ENCODE measurements at regions of chr11 and their contacts with region 1.

Region 1: DNA sequence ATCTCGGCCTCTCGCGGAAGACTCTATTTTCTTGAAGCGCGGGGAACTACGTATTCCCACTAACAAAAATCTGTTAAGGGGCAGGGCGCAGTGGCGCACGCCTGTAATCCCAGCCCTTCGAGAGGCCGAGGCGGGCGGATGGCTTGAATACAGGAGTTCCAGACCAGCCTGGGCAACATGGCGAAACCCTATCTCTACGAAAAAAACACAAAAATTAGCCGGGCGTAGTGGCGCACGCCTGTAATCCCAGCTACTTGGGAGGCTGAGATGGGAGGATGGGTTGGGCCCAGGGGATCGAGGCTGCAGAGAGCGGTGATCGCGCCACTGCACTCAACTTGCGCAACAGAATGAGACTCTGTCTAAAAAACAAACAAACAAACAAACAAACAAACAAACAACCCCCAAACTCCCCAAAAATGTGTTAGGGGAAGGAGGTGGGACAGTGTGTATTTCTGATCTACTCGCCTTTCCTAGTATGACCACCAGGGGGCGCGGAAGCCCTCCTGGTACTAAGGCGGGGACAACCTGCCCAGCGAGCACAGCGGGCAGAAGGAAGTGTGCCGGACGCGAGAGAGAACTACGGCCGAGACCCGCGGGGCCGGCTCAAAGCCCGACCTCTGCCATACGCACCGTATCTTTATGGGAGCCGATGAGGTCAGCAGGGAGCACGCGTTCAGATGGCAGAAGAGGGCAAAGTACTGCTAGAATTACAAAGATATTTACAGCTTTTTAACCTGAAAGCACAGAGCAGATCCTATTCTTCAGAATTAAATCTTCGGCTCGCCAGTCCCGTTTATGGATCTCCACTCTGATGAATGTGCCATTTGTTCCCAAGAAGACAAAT is 1.3 kb upstream of the STX3 start:
- DNase-seq: peak; percentile 87 to 94 (median 92)
- ATAC-seq: peak; percentile 83 to 84
- H3K4me3 ChIP-seq: peak overlapping the region; percentile 83
- H3K27ac ChIP-seq: no peak overlapping the region
- H3K4me1 ChIP-seq: peaks cover 6% of the 10 kb centered on the region
- H3K27me3 ChIP-seq: no peaks in the 10 kb centered on the region

Region 2: DNA sequence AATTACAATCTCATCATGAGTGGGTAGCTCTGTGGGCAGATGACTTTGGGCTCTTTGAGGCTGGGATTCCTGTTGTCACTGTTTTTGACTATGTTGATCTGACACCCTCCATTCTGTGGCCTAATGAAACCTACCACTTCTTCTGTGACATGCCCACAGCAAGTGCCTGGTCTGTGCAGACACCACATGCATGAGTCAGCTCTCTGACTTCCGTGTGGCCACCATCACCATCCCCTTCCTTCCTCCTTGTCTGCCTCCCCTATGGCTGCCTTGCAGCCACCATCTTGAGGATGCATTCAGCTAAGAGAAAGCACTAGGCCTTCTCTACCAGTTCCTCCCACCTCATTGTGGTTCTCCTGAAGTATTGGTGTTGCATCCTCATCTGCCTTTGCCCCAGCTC is 25.0 kb before region 1 on chr11:
- intact Hi-C with region 1: no loop called
- DNase-seq: no peak
- ATAC-seq: peak in 1 of 2 donors; percentile 11
- H3K4me3 ChIP-seq: no peak overlapping the region
- H3K27ac ChIP-seq: no peak overlapping the region
- H3K4me1 ChIP-seq: no peaks in the 10 kb centered on the region
- H3K27me3 ChIP-seq: no peaks in the 10 kb centered on the region

Region 3: GRCh38 chr11:59802639-59803176 is 48.8 kb after region 1 on chr11:
- intact Hi-C with region 1: loop called (anchors 1 to 5 kb)
- DNase-seq: no peak
- ATAC-seq: peak; percentile 74 to 77
- H3K4me3 ChIP-seq: no peak overlapping the region
- H3K27ac ChIP-seq: no peak overlapping the region
- H3K4me1 ChIP-seq: no peaks in the 10 kb centered on the region
- H3K27me3 ChIP-seq: no peaks in the 10 kb centered on the region